ENCODE measurements at regions of chr7 and their contacts with region 1.

Region 1: DNA sequence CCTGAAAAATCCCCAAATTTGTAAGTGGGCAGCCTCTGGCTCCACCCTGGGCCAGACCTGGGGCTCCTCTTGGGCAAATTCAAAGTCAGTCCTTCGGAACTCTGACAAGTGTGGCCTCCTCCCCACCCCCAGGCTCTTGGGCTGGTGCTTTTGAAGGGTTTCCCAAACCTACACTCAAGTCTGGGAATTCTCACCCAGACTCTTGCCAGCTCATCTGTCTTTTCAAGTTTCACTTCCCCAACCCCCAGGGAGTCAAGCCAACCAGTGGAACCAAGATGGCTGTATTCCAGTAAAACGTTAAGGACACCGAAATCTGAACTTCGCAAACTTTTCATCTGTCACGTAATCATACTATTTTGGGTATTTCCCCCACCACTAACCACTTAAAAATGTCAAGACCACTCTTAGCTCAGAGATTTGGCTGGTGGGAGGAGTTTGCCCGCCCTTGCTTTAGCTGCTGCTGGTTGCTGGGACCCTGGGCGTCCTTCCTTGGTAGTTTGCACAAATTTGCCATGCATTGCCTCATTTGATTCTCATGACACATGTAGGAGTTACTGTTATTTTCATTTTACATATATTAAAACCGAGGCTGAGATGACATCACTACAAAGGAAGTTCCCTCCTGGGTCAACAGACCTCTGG is 1.7 kb upstream of the MYO1G start:
- DNase-seq: peak; percentile 94
- H3K4me3 Mint-ChIP-seq: peak overlapping the region; percentile 97
- H3K27ac Mint-ChIP-seq: peak overlapping the region; percentile 100
- H3K4me1 Mint-ChIP-seq: peaks cover 67% of the 10 kb centered on the region
- H3K27me3 Mint-ChIP-seq: no peaks in the 10 kb centered on the region

Region 2: GRCh38 chr7:44615149-44615611 is 365.3 kb before region 1 on chr7:
- CTCF ChIA-PET with region 1: no interaction called
- POLR2A ChIA-PET with region 1: no interaction called
- intact Hi-C with region 1: loop called (anchors 5 kb)
- DNase-seq: peak; percentile 66
- H3K4me3 Mint-ChIP-seq: peak overlapping the region; percentile 1
- H3K27ac Mint-ChIP-seq: peak overlapping the region; percentile 65
- H3K4me1 Mint-ChIP-seq: peaks cover 63% of the 10 kb centered on the region
- H3K27me3 Mint-ChIP-seq: no peaks in the 10 kb centered on the region

Region 3: DNA sequence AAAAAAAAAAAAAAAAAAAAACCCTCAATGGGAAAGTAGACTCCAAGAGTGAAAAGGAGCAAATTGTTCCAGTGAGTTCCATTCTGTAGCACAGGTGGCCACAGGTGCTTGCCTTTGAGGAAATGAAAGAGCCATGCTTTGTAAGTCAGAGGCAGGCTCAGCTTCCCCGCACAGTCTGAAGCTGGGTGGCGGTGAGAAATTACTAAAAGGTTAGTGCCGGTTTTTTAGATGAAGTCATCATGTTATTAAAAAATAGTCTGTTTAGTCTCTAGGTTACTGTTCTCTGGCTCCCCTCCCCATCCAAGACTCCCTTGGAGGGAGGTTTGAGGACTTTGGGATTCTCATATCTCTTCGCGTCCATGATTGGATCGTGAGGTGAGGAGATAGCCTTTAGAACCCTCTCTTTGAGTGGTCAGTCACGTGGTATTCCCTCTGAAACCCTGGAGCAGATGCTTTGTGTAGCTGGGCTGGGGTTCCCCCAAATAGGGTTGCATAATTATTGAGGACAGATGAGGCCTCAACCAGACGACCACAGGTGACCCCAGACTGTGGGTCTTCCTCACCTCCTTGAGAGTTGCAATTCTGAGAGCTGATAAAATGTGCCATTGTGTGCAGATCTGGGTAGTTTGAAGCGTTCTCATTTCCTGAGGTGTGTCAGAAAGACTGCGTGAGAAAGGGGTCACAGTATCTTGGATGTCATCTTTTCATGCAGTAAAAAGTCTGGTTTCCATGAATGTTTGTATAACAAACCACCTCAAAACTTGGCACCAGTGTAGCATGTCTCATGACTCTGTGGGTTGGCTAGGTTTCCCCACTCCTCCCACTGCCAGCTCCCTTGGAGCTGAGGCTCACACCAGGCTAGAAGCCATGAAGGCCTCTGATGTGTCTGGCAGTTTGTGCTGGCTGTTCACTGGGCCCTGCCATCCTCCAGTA is 347.0 kb before region 1 on chr7:
- CTCF ChIA-PET with region 1: no interaction called
- POLR2A ChIA-PET with region 1: interaction called, 6 read pairs
- intact Hi-C with region 1: loop called (anchors 5 kb)
- DNase-seq: peak; percentile 84
- H3K4me3 Mint-ChIP-seq: peak overlapping the region; percentile 53
- H3K27ac Mint-ChIP-seq: peak overlapping the region; percentile 96
- H3K4me1 Mint-ChIP-seq: peaks cover 97% of the 10 kb centered on the region
- H3K27me3 Mint-ChIP-seq: no peaks in the 10 kb centered on the region

Region 4: GRCh38 chr7:44914992-44915607 is 65.4 kb before region 1 on chr7:
- CTCF ChIA-PET with region 1: no interaction called
- POLR2A ChIA-PET with region 1: no interaction called
- intact Hi-C with region 1: loop called (anchors 1 kb)
- DNase-seq: peak; percentile 88
- H3K4me3 Mint-ChIP-seq: no peak overlapping the region
- H3K27ac Mint-ChIP-seq: peak overlapping the region; percentile 76
- H3K4me1 Mint-ChIP-seq: peaks cover 20% of the 10 kb centered on the region
- H3K27me3 Mint-ChIP-seq: no peaks in the 10 kb centered on the region

Region 5: DNA sequence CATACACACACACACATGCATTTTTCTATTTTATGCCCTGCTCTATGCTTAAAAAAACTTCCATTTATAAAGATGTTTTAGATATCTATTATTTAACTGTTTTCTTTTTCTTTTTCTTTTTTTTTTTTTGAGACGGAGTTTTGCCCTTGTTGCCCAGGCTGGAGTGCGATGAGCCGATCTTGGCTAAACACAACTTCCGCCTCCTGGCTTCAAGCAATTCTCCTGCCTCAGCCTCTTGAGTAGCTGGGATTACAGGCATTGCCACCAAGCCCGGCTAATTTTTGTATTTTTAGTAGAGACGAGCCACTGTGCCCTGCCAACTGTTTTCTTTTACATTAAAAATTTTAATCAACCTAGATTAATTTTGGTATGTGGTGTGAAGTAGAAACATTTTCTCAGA is 49.6 kb before region 1 on chr7:
- CTCF ChIA-PET with region 1: no interaction called
- POLR2A ChIA-PET with region 1: no interaction called
- intact Hi-C with region 1: no loop called
- DNase-seq: no peak
- H3K4me3 Mint-ChIP-seq: no peak overlapping the region
- H3K27ac Mint-ChIP-seq: no peak overlapping the region
- H3K4me1 Mint-ChIP-seq: no peaks in the 10 kb centered on the region
- H3K27me3 Mint-ChIP-seq: no peaks in the 10 kb centered on the region

Region 6: GRCh38 chr7:44949303-44949702 is 31.2 kb before region 1 on chr7:
- CTCF ChIA-PET with region 1: no interaction called
- POLR2A ChIA-PET with region 1: no interaction called
- intact Hi-C with region 1: no loop called
- DNase-seq: no peak
- H3K4me3 Mint-ChIP-seq: no peak overlapping the region
- H3K27ac Mint-ChIP-seq: no peak overlapping the region
- H3K4me1 Mint-ChIP-seq: no peaks in the 10 kb centered on the region
- H3K27me3 Mint-ChIP-seq: peaks cover 8% of the 10 kb centered on the region

Region 7: DNA sequence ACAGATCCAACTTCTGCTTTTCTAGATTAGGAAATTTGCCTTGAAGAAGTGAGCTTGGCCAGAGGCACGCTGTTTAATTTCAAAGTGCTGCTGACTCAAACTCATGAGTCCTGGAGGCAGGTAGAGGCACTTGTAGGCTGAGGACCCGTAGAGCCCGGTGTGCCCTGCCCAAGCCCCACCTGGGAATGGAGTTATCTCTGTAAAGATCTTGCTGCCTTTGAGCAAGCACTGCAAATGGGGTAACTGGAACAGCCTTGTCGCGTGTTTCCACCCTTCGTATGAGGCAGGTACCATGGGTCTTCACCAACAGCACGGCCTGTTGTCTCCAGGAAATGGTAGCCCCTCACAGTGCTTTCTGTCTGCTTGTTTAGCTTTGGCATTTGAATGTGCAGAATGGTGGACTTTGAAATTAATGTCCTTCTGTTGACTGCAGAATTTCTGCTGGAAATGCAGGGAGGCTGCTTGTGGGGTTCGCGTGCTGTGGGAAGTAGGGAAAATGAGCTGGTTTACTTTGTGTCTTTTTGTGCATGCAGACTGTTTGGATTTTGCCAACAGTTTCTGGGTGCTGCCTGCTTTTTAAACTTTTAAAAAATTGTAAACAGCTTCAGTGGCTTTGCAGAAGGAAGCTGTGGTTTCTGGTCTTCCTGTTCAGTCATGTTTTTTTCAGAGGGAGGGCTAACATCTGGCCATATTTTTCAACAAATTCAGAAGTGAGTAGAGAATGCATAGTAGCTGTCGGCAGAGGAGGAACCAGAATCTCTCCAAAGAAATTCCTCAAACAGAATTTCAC is 46.7 kb after region 1 on chr7:
- CTCF ChIA-PET with region 1: interaction called, 4 read pairs
- POLR2A ChIA-PET with region 1: interaction called, 17 read pairs
- intact Hi-C with region 1: loop called (anchors 1 kb)
- DNase-seq: peak; percentile 30
- H3K4me3 Mint-ChIP-seq: peak overlapping the region; percentile 72
- H3K27ac Mint-ChIP-seq: peak overlapping the region; percentile 82
- H3K4me1 Mint-ChIP-seq: peaks cover 80% of the 10 kb centered on the region
- H3K27me3 Mint-ChIP-seq: no peaks in the 10 kb centered on the region

Region 8: DNA sequence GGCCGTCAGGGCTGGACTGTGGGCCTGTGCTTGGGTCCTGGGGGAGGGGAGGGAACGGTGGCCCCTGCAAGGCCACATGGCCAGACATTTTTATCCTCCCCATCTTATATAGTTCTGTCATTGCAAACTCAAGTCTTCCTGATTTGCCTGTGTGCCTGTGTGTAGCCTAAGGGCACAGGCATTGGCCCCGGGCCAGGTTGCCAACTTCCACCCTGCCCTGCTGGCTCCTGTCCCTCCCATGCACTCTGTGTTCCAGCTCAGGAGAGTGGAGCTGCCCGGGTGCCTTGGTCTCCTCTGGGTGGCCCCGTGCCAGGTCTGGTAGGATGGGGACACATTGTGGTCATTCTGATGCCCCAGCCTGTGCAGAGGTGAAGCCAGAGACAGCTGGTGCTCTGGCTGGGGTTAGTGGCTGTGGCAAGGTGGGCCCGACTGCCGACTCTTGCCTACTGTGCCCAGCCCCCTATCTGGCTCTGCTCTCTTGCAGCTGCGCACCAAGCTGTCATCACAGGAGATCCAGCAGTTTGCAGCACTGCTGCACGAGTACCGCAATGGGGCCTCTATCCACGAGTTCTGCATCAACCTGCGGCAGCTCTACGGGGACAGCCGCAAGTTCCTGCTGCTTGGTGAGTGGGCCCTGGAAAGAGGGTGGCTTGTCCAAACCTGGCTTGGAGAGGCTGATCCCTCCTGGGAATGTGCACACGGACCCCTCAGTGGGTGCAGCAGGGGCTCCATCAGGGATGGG is 93.4 kb after region 1 on chr7:
- CTCF ChIA-PET with region 1: no interaction called
- POLR2A ChIA-PET with region 1: no interaction called
- intact Hi-C with region 1: no loop called
- DNase-seq: no peak
- H3K4me3 Mint-ChIP-seq: no peak overlapping the region
- H3K27ac Mint-ChIP-seq: no peak overlapping the region
- H3K4me1 Mint-ChIP-seq: peaks cover 7% of the 10 kb centered on the region
- H3K27me3 Mint-ChIP-seq: no peaks in the 10 kb centered on the region

Region 9: GRCh38 chr7:45111298-45112223 is 131.0 kb after region 1 on chr7 and contains the start of gene TBRG4:
- CTCF ChIA-PET with region 1: interaction called, 21 read pairs
- POLR2A ChIA-PET with region 1: interaction called, 25 read pairs
- intact Hi-C with region 1: loop called (anchors 1 kb)
- DNase-seq: peak; percentile 96
- H3K4me3 Mint-ChIP-seq: peak within 1 kb of the TSS; percentile 96
- H3K27ac Mint-ChIP-seq: peak within 1 kb of the TSS; percentile 94
- H3K4me1 Mint-ChIP-seq: peaks cover 40% of the 10 kb centered on the region
- H3K27me3 Mint-ChIP-seq: no peaks in the 10 kb centered on the region
- total RNA-seq, gene TBRG4: 135 to 137 TPM

Region 10: DNA sequence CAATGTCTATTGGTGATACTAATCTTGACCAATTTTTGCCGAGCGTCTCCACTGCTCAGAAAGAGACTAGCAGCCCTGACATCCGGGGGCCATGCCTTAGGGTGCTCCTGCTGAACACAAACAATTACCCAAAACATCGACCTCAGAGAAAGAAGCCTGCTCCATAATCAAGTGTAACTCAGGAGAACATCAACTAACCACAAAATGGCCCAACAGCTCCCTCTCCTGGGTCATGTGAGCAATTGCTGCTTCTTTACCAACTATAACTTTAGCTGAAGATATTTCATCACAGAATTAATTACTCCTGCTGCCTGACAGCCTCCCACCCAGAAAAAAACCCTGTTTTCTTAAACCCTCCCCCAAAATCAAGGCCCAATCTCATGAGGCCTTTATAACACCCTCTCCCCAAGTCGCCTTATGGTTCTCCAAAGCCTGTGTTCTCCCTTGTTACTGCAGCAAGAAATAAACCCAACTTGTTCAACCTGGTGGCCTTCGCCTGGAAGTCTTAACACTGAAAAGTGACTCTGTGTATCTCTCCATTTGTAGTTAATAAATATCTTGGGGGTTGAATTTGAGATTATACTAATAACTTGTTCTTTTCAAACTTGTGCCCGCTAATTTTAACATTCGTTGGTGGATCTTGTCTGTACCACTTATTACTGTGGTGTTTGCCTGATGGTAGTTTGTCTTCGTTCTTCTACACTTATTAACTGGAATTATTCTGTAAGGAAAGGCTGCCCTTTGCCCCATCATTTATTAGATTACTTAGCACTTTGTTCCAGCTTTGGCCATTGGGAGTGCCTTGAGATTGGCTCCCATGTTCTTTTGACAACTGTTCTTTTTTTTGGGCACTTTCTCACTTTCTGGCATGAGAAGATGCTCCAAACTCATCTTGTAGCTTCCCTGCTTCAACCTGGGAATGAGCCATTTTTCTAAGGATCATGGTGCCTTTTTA is 155.9 kb after region 1 on chr7:
- CTCF ChIA-PET with region 1: interaction called, 112 read pairs
- POLR2A ChIA-PET with region 1: interaction called, 5 read pairs
- intact Hi-C with region 1: loop called (anchors 1 kb)
- DNase-seq: peak; percentile 81
- H3K4me3 Mint-ChIP-seq: no peak overlapping the region
- H3K27ac Mint-ChIP-seq: peak overlapping the region; percentile 9
- H3K4me1 Mint-ChIP-seq: peaks cover 9% of the 10 kb centered on the region
- H3K27me3 Mint-ChIP-seq: peaks cover 1% of the 10 kb centered on the region